ENCODE measurements at regions of chr10 and their contacts with region 1.

Region 1: DNA sequence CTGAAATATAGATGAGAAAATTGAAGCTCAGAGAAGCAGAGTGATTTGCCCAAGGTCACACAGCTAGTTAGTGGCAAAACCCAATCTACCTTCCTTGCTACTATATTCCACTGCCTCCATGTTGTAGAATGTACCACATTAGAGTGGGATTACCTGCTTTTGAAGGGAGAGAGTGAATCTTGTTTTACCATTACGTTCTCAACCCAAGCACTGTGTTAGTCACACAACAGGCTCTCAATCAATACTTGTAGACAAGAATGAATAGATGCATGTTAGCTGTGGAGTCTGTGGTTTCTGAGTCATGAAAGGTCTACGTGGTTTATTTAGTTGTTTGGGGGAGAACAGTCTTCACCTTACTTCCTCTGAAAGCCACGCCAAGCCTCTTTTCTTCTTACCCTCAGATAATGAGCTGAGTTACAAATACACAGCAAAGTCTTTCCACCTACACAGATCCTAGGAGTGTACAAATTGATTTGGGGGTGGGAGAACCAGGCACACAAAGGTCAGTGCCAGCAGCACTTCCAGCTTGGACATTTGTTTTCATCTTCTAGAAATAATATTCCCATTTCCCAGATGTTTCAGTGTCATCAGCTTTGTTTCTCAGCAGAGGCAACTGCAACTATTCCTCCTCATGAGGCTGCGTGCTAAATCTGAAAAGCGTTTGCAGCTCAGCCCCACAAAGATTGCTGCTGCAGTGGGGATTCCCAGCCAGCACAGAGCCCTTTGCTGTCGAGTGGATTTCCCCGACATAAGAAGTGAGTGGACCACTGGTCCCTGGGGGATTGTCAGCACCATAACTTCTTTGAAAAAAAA is 71.5 kb upstream of the ADO start:
- DNase-seq: peak; percentile 64
- H3K4me3 Mint-ChIP-seq: peak overlapping the region; percentile 72
- H3K27ac Mint-ChIP-seq: no peak overlapping the region
- H3K4me1 Mint-ChIP-seq: peaks cover 23% of the 10 kb centered on the region
- H3K27me3 Mint-ChIP-seq: no peaks in the 10 kb centered on the region

Region 2: DNA sequence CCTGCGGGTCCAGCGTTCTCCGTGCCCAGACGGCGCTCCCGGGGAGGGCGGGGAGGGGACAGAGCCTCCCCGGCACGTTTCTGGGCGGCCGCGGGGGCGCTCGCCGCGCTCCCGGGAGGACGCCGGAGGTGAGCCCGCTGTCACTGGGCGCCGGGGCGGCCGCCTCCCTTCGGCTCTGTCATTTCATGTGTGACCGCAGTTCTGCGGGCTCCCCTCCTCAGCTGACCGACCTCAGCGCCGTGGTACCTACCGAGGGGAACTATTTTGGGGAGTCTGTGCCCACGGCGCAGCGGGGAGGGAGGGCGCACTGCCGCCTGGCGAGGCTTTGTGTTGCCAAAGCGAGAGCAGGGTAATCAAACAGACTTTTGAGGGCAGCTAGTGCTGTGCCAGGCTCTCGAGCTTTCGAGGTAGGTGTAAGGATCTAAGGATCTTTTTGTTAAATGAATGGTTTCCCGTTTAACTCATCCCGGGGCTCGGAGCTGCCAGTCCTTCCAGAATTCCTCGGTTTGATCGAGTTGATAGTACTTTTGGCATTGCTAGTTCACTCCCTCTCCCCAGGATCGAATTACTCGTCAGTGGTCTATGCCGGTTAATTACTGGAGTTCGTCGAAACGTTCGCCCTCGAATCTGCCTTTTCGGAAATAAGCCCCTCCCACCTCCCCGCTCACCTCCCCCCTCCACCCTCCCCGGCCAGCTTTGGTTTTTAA is 829.7 kb before region 1 on chr10:
- intact Hi-C with region 1: loop called (anchors 5 kb)
- DNase-seq: peak; percentile 69
- H3K4me3 Mint-ChIP-seq: peak overlapping the region; percentile 97
- H3K27ac Mint-ChIP-seq: peak overlapping the region; percentile 95
- H3K4me1 Mint-ChIP-seq: peaks cover 60% of the 10 kb centered on the region
- H3K27me3 Mint-ChIP-seq: no peaks in the 10 kb centered on the region

Region 3: DNA sequence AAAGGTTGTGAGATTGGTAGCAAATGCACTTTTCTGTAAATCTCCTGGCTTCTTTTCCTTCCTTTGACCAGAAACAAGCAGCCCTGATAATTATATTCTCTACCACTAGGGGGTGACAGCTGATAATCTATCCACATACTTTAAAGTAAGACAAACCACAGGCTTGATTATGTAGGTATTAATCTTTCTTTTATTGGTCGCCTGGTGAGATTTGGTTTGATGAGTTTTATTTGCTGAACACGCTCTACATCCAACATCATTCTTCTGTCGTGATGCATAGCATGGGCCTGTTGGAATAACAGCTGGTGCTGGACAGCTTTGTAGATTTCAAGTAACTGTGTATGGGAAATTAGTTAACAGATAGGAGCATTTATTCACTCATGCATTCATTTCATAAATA is 295.4 kb before region 1 on chr10:
- intact Hi-C with region 1: loop called (anchors 5 kb)
- DNase-seq: no peak
- H3K4me3 Mint-ChIP-seq: no peak overlapping the region
- H3K27ac Mint-ChIP-seq: no peak overlapping the region
- H3K4me1 Mint-ChIP-seq: peaks cover 12% of the 10 kb centered on the region
- H3K27me3 Mint-ChIP-seq: peaks cover 15% of the 10 kb centered on the region

Region 4: GRCh38 chr10:62681211-62681940 is 51.7 kb before region 1 on chr10:
- intact Hi-C with region 1: loop called (anchors 1 kb)
- DNase-seq: peak; percentile 80
- H3K4me3 Mint-ChIP-seq: peak overlapping the region; percentile 69
- H3K27ac Mint-ChIP-seq: peak overlapping the region; percentile 95
- H3K4me1 Mint-ChIP-seq: peaks cover 77% of the 10 kb centered on the region
- H3K27me3 Mint-ChIP-seq: no peaks in the 10 kb centered on the region

Region 5: DNA sequence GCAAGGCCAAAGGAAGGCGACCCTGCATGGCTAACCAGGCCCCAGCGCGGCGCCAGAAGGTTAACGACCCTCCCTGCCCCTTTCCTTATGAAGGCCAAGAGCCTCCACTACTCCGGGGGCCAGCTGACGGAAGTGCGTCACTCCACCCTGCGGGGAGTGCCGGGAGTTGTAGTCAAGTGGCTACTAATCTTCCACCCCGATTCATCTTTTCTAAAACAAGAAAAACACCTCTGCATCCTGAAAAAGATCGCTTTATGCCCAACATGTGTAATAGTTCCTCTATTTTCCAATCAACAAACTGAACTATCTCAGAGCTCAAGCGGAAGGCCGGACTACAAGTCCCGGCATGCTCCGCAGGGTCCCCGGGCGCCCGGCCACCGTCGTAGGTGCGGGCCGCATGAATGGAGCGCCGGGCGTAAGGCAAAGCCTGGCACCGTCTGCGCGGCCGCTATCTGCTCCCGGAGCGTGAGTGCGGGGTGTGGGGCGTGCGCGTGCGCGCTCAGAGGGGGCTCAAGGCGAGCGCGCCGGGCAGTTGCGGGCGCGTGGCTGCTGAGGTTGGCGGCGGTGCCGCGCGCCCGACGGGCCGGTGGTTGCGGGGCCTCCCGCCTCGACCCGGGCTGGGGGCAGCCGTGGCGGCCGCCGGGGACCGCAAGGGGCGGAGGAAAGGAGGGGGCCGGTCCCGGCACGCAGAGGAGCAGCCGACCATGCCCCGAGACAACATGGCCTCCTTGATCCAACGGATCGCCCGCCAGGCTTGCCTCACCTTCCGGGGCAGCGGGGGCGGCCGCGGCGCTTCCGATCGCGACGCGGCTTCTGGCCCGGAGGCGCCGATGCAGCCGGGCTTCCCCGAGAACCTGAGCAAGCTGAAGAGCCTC is 71.5 kb after region 1 on chr10 and contains the start of gene ADO:
- intact Hi-C with region 1: loop called (anchors 1 kb)
- DNase-seq: peak; percentile 68
- H3K4me3 Mint-ChIP-seq: peak within 1 kb of the TSS; percentile 90
- H3K27ac Mint-ChIP-seq: peak within 1 kb of the TSS; percentile 95
- H3K4me1 Mint-ChIP-seq: peaks cover 41% of the 10 kb centered on the region
- H3K27me3 Mint-ChIP-seq: peaks cover 11% of the 10 kb centered on the region
- total RNA-seq, gene ADO: 52.3 and 55.8 TPM in 2 replicates

Region 6: GRCh38 chr10:62831346-62831745 is 98.3 kb after region 1 on chr10:
- intact Hi-C with region 1: no loop called
- DNase-seq: no peak
- H3K4me3 Mint-ChIP-seq: no peak overlapping the region
- H3K27ac Mint-ChIP-seq: no peak overlapping the region
- H3K4me1 Mint-ChIP-seq: peaks cover 5% of the 10 kb centered on the region
- H3K27me3 Mint-ChIP-seq: peaks cover 18% of the 10 kb centered on the region

Region 7: DNA sequence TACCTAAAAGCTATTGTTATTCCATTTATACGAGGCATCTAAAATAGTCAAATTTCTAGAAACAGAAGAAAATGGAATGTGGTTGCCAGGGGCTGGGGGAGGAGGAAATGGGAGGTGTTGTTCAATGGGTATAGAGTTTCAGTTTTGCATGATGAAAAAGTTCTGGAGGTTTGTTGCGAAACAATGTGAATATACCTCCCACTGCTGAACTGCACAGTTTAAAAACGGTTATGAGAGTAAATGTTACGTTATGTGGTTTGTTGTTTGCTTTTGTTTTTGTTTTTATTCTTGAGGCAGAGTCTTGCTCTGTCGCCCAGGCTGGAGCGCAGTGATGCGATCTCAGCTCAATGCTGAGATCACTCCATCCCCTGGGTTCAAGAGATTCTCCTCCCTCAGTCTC is 335.2 kb after region 1 on chr10:
- intact Hi-C with region 1: loop called (anchors 2 kb)
- DNase-seq: peak; percentile 2
- H3K4me3 Mint-ChIP-seq: no peak overlapping the region
- H3K27ac Mint-ChIP-seq: peak overlapping the region; percentile 19
- H3K4me1 Mint-ChIP-seq: peaks cover 25% of the 10 kb centered on the region
- H3K27me3 Mint-ChIP-seq: peaks cover 5% of the 10 kb centered on the region

Region 8: GRCh38 chr10:63313066-63313717 is 580.1 kb after region 1 on chr10:
- intact Hi-C with region 1: no loop called
- DNase-seq: no peak
- H3K4me3 Mint-ChIP-seq: no peak overlapping the region
- H3K27ac Mint-ChIP-seq: no peak overlapping the region
- H3K4me1 Mint-ChIP-seq: no peaks in the 10 kb centered on the region
- H3K27me3 Mint-ChIP-seq: no peaks in the 10 kb centered on the region

Measured in activated T-helper 1 cell treated with anti-CD3 and anti-CD28 coated beads, Interleukin-12 subunit alpha, Interleukin-12 subunit beta, Interleukin-2, Interleukin-4 antibody, amounts not matched to agents 30 ng/mL and 10 ng/mL and 1 ng/mL, durations not matched to agents 14 hours and 24 hours and 36 hours (primary cell).